PC-9 (cell line): ENCODE measurements at regions of chr12 and their contacts with region 1.

Region 1: GRCh38 chr12:47021298-47021697 is 58.1 kb upstream of the PCED1B start:
- DNase-seq: peak; percentile 28 to 72
- H3K4me3 ChIP-seq: no peak overlapping the region
- H3K27ac ChIP-seq: no peak overlapping the region
- H3K4me1 ChIP-seq: peaks cover 30% of the 10 kb centered on the region
- H3K27me3 ChIP-seq: no peaks in the 10 kb centered on the region
- CTCF ChIP-seq: peak; percentile 82

Region 2: DNA sequence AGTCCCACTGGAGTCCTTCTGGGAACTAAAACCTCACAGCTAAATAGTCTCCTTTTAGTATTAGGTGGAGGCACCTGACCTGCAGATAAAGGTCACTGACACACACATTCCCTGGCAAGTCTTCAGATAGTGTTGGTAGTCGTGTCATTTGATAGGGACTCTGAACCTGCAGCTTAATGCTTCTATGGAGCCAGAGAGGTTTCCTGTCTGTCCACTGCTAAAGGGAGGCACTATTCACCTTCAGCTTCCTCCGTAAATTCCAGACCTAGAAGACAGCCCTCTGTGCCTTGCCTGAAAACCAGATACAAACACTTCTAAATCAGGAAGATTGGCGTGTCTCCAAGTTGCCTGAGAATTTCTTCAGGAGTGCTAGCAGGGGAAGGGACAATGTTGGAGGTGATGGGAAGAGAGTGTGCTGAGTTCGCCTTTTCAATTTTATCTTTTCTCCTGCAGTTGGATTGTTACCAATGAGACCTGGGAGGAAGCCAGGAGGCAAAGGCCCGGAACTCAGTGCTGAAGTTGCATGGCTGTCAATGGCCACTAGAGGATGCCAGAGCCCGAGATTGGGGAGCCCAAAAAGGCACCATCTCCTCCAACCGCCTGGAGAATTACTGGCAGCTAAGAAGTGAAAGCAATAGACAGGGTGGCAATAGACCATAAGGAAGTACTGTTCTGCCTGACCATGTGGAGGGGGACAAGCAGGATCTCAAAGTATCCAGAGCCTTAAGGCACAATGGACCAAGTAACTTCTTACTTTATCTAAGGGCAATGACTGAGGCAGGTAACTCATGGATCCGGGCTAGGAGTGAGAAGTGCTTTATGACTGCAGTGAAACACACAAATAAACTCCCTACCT is 949.3 kb before region 1 on chr12:
- CTCF ChIA-PET with region 1: no interaction called
- POLR2A ChIA-PET with region 1: no interaction called
- intact Hi-C with region 1: loop called (anchors 1 kb)
- DNase-seq: peak; percentile 56 to 69
- H3K4me3 ChIP-seq: no peak overlapping the region
- H3K27ac ChIP-seq: no peak overlapping the region
- H3K4me1 ChIP-seq: no peaks in the 10 kb centered on the region
- H3K27me3 ChIP-seq: no peaks in the 10 kb centered on the region
- CTCF ChIP-seq: peak; percentile 90

Region 3: GRCh38 chr12:46372544-46373110 is 648.7 kb before region 1 on chr12 and contains the start of gene SLC38A2:
- CTCF ChIA-PET with region 1: no interaction called
- POLR2A ChIA-PET with region 1: no interaction called
- intact Hi-C with region 1: loop called (anchors 5 kb)
- DNase-seq: peak; percentile 70 to 94
- H3K4me3 ChIP-seq: peak within 1 kb of the TSS; percentile 94
- H3K27ac ChIP-seq: peak within 1 kb of the TSS; percentile 97
- H3K4me1 ChIP-seq: peaks cover 43% of the 10 kb centered on the region
- H3K27me3 ChIP-seq: no peaks in the 10 kb centered on the region
- CTCF ChIP-seq: no peak
- total RNA-seq, gene SLC38A2: 193 and 322 TPM in 2 replicates

Region 4: DNA sequence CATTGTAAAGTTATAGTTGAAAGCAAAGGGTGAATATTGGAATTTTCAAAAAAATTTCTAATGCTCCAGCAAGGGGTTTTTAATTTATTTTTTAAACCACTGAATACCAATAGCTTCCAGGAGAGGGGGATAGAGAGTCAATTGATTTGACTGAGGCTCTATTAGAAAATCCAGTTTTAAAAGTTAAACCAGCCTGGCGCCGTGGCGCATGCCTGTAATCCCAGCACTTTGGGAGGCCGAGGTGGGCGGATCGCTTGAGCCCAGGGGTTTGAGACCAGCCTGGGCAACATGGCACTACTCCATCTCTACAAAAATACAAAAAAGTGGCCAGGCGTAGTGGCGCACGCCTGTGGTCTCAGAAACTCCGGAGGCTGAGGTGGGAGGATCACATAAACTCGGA is 345.6 kb before region 1 on chr12:
- CTCF ChIA-PET with region 1: no interaction called
- POLR2A ChIA-PET with region 1: no interaction called
- intact Hi-C with region 1: loop called (anchors 2 kb)
- DNase-seq: no peak
- H3K4me3 ChIP-seq: no peak overlapping the region
- H3K27ac ChIP-seq: no peak overlapping the region
- H3K4me1 ChIP-seq: peaks cover 26% of the 10 kb centered on the region; the same call in 1 of the 2 replicates
- H3K27me3 ChIP-seq: no peaks in the 10 kb centered on the region
- CTCF ChIP-seq: peak; percentile 76

Region 5: GRCh38 chr12:46983393-46984266 is 37.7 kb before region 1 on chr12:
- CTCF ChIA-PET with region 1: no interaction called
- POLR2A ChIA-PET with region 1: interaction called, 4 read pairs
- intact Hi-C with region 1: loop called (anchors 2 kb)
- DNase-seq: peak; percentile 44 to 62
- H3K4me3 ChIP-seq: no peak overlapping the region
- H3K27ac ChIP-seq: no peak overlapping the region
- H3K4me1 ChIP-seq: peaks cover 14% of the 10 kb centered on the region
- H3K27me3 ChIP-seq: no peaks in the 10 kb centered on the region
- CTCF ChIP-seq: peak; percentile 84